Activated CD4-positive, alpha-beta memory T cell treated with anti-CD3 and anti-CD28 coated beads for 36 hours (primary cell): ENCODE measurements at regions of chrX and their contacts with region 1.

Region 1: DNA sequence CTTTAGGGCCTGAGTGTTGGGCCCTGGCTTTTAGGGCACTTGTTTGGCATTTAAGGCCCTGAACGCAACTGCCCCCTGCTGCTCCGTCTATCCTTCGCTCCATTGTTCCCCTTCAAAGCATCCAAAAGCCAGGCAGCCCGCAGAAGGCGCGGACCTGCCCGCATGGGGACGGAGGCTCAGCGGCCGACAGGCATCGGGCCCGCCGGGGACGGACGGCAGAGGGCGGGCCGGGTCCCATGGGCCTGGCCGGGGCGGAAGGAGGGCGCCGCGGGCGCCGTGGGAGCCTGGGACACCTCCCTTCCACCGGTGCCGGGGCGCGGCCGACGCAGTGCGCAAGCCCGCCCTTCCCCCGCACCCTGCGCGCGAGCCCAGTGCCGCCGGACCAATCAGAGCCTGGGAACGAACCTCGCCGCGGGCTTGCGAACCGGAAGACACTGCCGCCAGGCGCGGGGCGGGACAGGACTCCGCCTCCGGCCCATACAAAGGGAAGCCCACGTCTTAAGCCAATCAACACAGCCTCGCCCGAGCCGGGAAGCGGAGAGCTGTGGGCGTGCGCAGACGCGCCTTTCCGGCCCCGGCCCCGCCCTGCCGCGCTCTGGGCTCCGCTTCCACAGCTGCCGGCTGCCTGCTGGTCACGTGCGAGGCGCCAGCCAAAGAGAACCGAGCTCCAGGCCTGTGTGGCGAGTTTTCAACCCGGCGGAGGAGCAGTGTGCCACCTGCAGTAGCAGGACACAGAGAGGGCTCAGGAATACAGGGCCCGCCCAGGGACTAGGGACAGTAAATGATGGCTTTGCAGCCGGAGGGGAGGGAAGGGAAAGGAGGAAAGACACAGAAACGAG is 2.1 kb upstream of the ARHGAP4 start:
- DNase-seq: peak; percentile 96
- H3K4me3 Mint-ChIP-seq: peak overlapping the region; percentile 86
- H3K27ac Mint-ChIP-seq: peak overlapping the region; percentile 98
- H3K4me1 Mint-ChIP-seq: peaks cover 35% of the 10 kb centered on the region
- H3K27me3 Mint-ChIP-seq: no peaks in the 10 kb centered on the region

Region 2: DNA sequence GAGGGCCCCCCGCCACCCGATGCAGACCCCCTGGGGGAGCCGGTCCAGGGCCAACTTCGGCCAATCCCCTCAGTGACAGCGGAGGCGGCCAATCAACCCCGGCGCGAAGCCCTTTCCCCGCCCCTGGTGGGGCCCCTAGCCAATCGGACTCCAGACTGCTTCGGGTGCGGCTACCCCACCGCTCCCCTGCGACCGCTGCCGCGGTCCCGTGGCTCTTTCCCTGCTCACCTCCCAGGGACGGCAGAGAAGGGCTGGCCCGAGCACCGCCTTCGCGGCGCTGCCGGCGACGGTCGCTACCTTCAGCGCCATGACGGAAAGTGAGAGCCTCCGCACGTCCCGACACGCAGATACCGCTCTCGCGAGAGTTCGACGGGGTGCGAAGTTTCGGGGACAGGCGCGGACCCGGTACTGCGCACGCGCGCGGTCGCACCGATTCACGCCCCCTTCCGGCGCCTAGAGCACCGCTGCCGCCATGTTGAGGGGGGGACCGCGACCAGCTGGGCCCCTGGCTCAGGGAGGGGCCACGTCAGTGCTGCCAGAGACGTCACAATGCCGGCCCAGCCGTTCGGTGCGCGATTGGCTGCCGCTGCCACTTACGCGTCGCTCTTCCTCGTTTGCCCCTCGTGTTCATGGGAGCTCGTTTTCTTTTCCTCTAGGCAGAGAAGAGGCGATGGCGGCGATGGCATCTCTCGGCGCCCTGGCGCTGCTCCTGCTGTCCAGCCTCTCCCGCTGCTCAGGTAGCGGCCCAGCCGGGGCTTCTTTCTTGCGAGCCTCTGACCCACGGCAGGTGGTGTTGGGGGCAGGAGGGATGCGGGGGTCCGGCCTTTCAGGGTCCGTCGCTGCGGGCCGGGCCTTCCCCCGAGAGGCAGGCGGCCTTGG is 133.9 kb before region 1 on chrX and contains the starts of genes IDH3G and SSR4:
- CTCF ChIA-PET with region 1: interaction called, 6 read pairs
- POLR2A ChIA-PET with region 1: interaction called, 17 read pairs
- intact Hi-C with region 1: loop called (anchors 1 kb)
- DNase-seq: peak; percentile 95
- H3K4me3 Mint-ChIP-seq: peak within 1 kb of the TSS; percentile 90
- H3K27ac Mint-ChIP-seq: peak within 1 kb of the TSS; percentile 80
- H3K4me1 Mint-ChIP-seq: peaks cover 18% of the 10 kb centered on the region
- H3K27me3 Mint-ChIP-seq: no peaks in the 10 kb centered on the region
- total RNA-seq, gene IDH3G: 45.9 to 51.5 TPM
- total RNA-seq, gene SSR4: 194 to 203 TPM

Region 3: GRCh38 chrX:154002215-154002719 is 74.1 kb after region 1 on chrX:
- CTCF ChIA-PET with region 1: no interaction called
- POLR2A ChIA-PET with region 1: no interaction called
- intact Hi-C with region 1: no loop called
- DNase-seq: peak; percentile 70
- H3K4me3 Mint-ChIP-seq: peak overlapping the region; percentile 65
- H3K27ac Mint-ChIP-seq: peak overlapping the region; percentile 87
- H3K4me1 Mint-ChIP-seq: peaks cover 11% of the 10 kb centered on the region
- H3K27me3 Mint-ChIP-seq: no peaks in the 10 kb centered on the region

Region 4: DNA sequence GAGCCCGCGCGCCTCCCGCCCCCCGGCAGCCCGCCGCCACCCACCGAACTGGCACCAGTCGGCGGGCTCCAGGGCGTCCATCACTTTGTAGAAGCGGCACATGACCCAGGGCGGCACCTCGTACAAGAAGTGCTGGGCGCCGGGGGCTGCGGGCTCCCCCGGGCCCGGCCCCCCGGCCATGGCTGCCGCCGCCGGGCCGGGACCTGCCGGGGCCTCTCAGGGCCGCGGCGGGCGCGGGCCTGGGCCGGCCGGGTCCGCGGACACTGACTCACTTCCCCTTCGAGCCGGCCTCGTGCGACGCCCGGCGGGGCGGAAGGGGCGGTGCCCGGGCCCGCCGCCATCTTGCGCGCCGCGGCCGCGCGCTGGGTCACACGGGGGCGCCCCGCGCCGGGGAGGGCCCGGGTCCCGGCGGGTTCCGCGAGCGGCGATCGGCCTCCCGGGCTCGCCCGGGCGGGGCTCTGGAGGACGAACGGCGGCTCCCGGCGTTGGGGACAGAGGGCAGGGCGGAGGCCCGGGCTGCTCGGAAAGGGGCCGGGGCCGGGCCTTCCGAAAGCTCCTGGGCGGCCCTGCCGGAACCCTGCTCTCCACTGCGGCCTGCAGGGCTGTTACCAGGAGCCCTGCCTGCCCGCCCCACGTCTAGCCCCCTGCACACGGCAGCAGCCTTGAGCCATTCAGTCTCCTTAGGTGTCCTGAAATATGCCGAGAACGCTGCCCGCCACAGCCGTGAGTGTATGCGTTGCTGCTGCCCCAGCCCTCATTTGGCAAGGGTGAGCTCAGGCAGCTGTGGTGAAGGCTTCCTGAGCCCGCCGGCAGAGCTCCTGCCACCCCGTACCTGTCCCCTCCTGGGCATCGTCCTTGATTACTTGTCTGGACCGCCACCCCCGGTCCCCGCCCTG is 91.7 kb after region 1 on chrX and contains the start of gene IRAK1:
- CTCF ChIA-PET with region 1: no interaction called
- POLR2A ChIA-PET with region 1: interaction called, 10 read pairs
- intact Hi-C with region 1: no loop called
- DNase-seq: peak; percentile 65
- H3K4me3 Mint-ChIP-seq: peak within 1 kb of the TSS; percentile 89
- H3K27ac Mint-ChIP-seq: peak within 1 kb of the TSS; percentile 94
- H3K4me1 Mint-ChIP-seq: peaks cover 20% of the 10 kb centered on the region
- H3K27me3 Mint-ChIP-seq: no peaks in the 10 kb centered on the region
- total RNA-seq, gene IRAK1: 99.6 to 106 TPM

Region 5: DNA sequence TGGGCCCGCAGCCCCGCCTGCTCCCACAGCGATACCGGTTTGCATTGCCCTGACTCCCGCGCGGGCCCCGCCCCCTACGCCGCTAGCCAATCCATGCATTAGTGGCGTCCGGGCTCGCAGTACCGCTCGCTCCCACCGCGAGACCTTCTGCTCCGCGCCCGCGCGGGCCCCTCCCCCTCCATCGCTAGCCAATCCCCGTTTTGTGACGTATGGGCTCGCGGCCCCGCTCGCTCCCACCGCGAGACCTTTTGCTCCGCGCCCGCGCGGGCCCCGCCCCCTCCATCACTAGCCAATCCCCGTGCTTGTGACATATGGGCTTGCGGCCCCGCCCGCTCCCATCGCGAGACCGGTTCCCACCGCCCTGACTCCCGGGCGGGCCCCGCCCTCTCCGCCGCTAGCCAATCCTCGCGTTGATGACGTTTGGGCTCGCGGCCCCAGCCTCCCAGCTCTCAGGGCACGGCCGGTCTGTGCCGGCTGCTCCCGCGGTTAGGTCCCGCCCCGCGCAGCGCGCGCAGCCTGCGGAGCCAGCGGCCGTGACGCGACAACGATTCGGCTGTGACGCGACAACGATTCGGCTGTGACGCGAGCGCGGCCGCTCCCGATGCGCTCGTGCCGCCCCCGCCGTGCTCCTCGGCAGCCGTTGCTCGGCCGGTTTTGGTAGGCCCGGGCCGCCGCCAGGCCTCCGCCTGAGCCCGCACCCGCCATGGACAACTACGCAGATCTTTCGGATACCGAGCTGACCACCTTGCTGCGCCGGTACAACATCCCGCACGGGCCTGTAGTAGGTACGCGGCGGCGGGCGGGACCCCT is 450.8 kb after region 1 on chrX and contains the start of gene EMD:
- CTCF ChIA-PET with region 1: no interaction called
- POLR2A ChIA-PET with region 1: no interaction called
- intact Hi-C with region 1: loop called (anchors 1 kb)
- DNase-seq: peak; percentile 97
- H3K4me3 Mint-ChIP-seq: peak within 1 kb of the TSS; percentile 83
- H3K27ac Mint-ChIP-seq: peak within 1 kb of the TSS; percentile 87
- H3K4me1 Mint-ChIP-seq: peaks cover 24% of the 10 kb centered on the region
- H3K27me3 Mint-ChIP-seq: no peaks in the 10 kb centered on the region
- total RNA-seq, gene EMD: 75.8 to 79.1 TPM